K562 (cell line): ENCODE measurements at regions of chr1 and their contacts with region 1.

Region 1: GRCh38 chr1:116418091-116418830 is 45.2 kb downstream of the ATP1A1 start:
- DNase-seq: peak; percentile 71 to 89 (median 84)
- ATAC-seq: peak; percentile 63
- H3K4me3 ChIP-seq: peak overlapping the region; percentile 57
- H3K27ac ChIP-seq: peak overlapping the region; percentile 70
- H3K4me1 ChIP-seq: peaks cover 44 to 70% of the 10 kb centered on the region in 2 experiments
- H3K27me3 ChIP-seq: no peaks in the 10 kb centered on the region
- CTCF ChIP-seq: no peak
- EP300 ChIP-seq: 0 out of 2 replicates have a peak, but pooled peaks have one; percentile 28
- POLR2A ChIP-seq: peak; percentile 80
- RAD21 ChIP-seq: 0 out of 4 replicates have a peak, but pooled peaks of 1 of the 2 experiments have one; percentile 19

Region 2: DNA sequence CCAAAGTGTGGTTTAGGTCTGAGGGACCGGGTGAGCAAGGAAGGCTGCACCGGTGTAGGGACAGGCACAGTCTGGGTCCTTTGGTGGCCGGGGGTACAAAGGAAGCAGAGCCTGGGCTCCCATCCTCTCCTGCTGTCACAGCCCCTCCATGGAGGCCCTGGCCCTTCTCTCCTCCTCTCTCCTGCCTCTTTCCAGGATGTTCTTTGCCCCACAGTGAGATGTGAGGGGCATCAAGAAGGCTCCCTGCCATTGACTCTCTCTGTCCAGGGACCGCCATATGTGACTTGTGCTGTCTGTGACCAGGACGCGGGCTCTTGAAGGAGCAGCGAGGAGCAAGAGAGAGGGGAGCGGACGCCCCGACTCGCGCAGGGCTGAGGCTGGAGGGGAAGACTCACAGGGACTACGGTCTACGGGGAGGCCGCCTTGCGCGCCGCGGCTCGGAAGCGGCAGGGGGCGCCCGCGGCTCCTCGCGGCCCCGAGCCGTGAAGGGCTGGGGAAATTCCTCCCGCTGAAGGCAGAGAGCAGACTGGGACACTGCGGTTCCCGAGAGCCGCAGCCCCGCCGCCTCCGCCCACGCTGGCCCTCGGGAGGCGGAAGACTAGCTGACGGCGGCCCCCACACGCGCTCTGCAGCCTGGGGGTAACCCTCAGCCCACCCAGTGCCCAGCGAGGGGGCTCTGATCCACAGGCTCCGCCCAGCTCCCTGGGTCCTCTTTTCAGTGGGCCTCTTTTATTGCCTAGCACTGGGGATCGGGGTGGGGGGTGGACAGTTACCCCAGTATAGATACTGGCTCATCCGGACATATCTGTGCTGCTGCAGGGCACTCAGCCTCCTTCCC is 266.3 kb before region 1 on chr1:
- CTCF ChIA-PET with region 1: no interaction called
- POLR2A ChIA-PET with region 1: no interaction called
- in situ Hi-C with region 1: no loop called
- intact Hi-C with region 1: loop called (anchors 5 kb)
- DNase-seq: peak; percentile 88 to 94 (median 93)
- ATAC-seq: peak; percentile 99
- H3K4me3 ChIP-seq: peak overlapping the region; percentile 45
- H3K27ac ChIP-seq: peak overlapping the region; percentile 51; the same call in 1 of the 3 replicates
- H3K4me1 ChIP-seq: peaks cover 4 to 7% of the 10 kb centered on the region in 2 experiments
- H3K27me3 ChIP-seq: peaks cover 7% of the 10 kb centered on the region in 2 experiments; a peak in 2 of 5 replicates
- CTCF ChIP-seq: peak; percentile 94 to 99 (median 97)
- EP300 ChIP-seq: no peak
- POLR2A ChIP-seq: no peak
- RAD21 ChIP-seq: peak; percentile 92 to 93

Region 3: DNA sequence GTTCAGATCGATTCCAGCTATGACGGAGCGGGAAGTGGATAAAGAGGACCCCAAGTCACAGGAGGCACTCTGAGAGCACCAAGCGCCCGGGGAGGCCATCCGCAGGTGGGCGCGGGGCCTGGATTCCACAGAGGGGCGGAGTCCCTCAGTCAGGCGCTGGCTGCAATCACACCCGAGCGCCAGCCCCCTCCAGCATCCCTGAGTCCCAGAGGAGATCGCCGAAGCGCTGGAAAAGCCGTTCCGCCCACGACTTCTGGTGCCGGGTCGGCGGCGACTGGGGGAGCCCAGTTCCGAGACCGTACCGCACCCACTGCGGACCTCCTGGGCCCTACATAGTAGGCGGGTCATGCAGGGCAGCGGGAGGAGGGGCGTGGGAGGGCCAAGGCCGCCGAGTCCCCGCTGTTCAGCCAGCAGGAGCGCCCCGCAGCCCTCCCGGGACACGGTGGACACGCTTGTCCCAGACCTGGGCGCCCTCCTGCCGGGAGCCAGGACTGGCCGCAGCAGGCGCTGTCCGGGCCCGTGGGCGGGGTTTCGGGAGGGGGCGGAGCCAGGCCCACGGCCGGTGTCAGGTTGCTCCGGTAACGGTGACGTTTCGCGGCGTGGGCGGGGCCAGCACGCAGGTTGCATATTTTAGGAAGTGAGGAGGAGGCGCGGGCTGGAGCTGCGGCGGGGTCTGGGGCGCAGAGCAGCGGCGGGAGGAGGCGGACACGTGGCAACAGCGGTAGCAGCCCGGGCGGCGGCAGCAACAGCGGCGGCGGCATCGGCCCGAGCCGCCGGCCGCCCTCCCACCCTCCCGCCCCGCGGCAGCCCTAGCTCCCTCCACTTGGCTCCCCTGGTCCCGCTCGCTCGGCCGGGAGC is 45.4 kb before region 1 on chr1 and contains the start of gene ATP1A1:
- CTCF ChIA-PET with region 1: interaction called, 3 read pairs
- POLR2A ChIA-PET with region 1: interaction called, 8 read pairs
- in situ Hi-C with region 1: no loop called
- intact Hi-C with region 1: loop called (anchors 2 kb)
- DNase-seq: peak; percentile 97 to 99 (median 99)
- ATAC-seq: peak; percentile 84
- H3K4me3 ChIP-seq: peak within 1 kb of the TSS; percentile 73
- H3K27ac ChIP-seq: peak within 1 kb of the TSS; percentile 90
- H3K4me1 ChIP-seq: peaks cover 18 to 37% of the 10 kb centered on the region in 2 experiments
- H3K27me3 ChIP-seq: 0 out of 5 replicates have a peak, but pooled peaks cover 0 to 3% of the 10 kb centered on the region in 2 experiments
- CTCF ChIP-seq: peak in 1 of 3 experiments; percentile 18; a peak in 1 of 6 replicates
- EP300 ChIP-seq: peak; percentile 55; the same call in 1 of the 2 replicates
- POLR2A ChIP-seq: peak; percentile 79
- RAD21 ChIP-seq: no peak; a peak in 1 of 4 replicates
- polyA plus RNA-seq, gene ATP1A1: 113 to 135 TPM

Region 4: DNA sequence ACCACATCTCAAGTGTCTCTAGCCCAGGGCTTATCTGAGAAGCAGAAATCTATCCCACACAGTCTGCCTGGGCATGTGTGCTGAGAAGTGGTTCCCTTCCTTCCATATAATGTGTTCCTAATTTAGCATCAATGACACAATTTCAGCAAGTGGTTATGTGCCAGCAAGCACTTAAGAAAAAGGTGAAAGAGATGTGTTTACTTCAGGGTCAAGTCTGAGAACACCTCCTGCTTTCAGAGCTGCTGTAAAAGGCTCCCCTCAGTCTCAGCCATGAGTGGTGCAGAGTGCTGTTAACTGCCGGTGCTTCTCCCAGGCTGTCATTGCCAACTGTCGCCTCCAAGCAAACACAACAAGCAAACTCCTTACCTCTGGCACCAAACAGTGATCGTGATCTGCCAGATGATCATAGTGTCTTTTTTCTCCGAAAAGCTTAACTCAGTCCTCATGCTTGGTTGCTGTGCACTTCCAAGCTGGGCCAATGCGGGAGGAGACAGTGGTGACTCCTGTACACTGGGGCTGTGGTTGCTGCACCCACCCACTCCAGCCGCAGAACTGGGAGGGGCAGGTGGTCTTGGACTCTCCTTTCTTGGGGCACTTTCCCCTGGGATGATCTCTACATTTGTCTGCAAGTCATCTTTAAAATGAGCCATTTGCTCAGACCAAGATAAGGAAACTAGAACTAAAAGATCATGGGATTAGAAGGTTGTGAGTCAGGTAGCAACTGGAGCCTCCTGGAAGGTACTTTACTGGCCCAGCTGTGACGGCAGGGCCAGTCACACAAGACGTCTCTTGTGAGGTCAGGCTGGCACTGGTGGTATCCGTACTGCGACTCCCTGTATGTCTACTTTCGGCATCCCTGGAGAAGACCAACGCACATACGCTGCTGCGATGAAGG is 12.8 kb before region 1 on chr1:
- CTCF ChIA-PET with region 1: no interaction called
- POLR2A ChIA-PET with region 1: interaction called, 13 read pairs
- in situ Hi-C with region 1: no loop called
- intact Hi-C with region 1: no loop called
- DNase-seq: peak in 1 of 4 experiments; percentile 48
- ATAC-seq: peak; percentile 9
- H3K4me3 ChIP-seq: no peak overlapping the region
- H3K27ac ChIP-seq: peak overlapping the region; percentile 1; the same call in 2 of the 3 replicates
- H3K4me1 ChIP-seq: peaks cover 30 to 60% of the 10 kb centered on the region in 2 experiments; a peak in 4 of 5 replicates
- H3K27me3 ChIP-seq: no peaks in the 10 kb centered on the region
- CTCF ChIP-seq: no peak
- EP300 ChIP-seq: peak; percentile 44; the same call in 1 of the 2 replicates
- POLR2A ChIP-seq: peak; percentile 53; the same call in 1 of the 2 replicates
- RAD21 ChIP-seq: no peak

Region 5: DNA sequence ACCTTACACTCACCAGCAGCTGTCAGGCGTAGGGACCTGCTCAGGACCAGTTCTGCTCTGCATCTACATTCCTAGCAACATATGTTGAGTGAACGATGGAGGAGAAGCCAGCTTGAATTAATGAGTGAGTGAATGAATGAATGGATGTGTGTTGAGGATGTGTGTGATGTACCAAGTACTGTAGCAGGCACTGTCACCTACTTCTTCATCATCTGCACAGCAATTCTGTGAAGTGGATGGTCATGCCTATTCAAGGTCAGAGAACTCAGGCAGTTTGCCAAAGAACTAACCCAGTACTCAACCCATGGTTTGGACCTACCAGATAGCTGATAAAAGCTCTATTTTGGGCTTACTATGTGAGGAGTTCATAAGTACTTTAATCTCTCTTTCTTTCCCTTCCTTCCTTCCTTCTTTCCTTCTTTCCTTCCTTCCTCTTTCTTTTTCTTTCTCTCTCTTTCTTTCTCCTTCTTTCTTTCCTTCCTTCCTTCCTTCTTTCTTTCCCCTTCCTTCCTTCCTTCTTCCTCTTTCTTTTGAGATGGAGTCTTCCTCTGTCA is 11.6 kb after region 1 on chr1:
- CTCF ChIA-PET with region 1: no interaction called
- POLR2A ChIA-PET with region 1: interaction called, 13 read pairs
- in situ Hi-C with region 1: no loop called
- intact Hi-C with region 1: no loop called
- DNase-seq: peak in 1 of 4 experiments; percentile 71
- ATAC-seq: 0 out of 3 replicates have a peak, but pooled peaks have one; percentile 7
- H3K4me3 ChIP-seq: no peak overlapping the region
- H3K27ac ChIP-seq: no peak overlapping the region
- H3K4me1 ChIP-seq: peaks cover 20 to 29% of the 10 kb centered on the region in 2 experiments; a peak in 4 of 5 replicates
- H3K27me3 ChIP-seq: no peaks in the 10 kb centered on the region
- CTCF ChIP-seq: no peak
- EP300 ChIP-seq: no peak
- POLR2A ChIP-seq: no peak
- RAD21 ChIP-seq: no peak

Region 6: GRCh38 chr1:116474921-116475849 is 56.9 kb after region 1 on chr1:
- CTCF ChIA-PET with region 1: no interaction called
- POLR2A ChIA-PET with region 1: interaction called, 3 read pairs
- in situ Hi-C with region 1: no loop called
- intact Hi-C with region 1: loop called (anchors 5 kb)
- DNase-seq: no peak
- ATAC-seq: no peak
- H3K4me3 ChIP-seq: no peak overlapping the region
- H3K27ac ChIP-seq: no peak overlapping the region
- H3K4me1 ChIP-seq: peaks cover 25 to 27% of the 10 kb centered on the region in 2 experiments; a peak in 4 of 5 replicates
- H3K27me3 ChIP-seq: no peaks in the 10 kb centered on the region
- CTCF ChIP-seq: no peak
- EP300 ChIP-seq: no peak
- POLR2A ChIP-seq: no peak
- RAD21 ChIP-seq: no peak